ENCODE measurements at regions of chr10 and their contacts with region 1.

Region 1: DNA sequence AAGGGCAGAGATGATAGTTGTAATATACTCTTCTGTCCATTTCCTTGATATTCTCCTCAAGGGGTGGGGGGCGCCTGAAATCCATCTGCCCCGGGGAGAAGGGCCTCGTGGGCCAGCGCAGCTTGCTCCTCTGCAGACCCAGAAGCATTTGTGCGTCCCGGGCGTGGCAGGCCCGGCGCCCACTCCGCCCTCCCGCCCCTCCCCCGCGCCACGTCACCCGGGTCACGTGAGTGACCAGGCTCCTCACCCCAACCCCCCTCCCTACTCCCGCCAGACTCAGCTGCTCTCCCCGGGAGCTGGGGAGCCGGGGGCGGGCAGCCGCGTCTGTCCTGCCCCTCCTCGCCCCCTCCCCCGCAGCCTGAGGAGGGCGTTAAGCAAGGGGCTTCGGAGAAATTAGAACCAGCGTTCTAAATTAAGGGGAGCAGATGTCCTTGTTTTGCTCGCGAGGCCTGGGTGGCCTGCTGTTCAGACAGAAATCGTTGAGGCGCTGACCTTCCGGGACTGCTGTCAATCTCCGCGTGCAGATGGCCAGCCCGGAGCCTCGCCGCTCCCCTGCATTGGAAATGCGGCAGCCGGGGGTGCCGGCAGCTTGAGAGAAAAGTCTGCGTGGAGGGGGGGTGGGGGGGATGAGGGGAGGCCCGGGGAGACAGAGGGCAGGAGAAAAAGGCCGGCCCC is 102.1 kb upstream of the ZNF438 start:
- DNase-seq: peak; percentile 64 to 97 (median 78)

Region 2: DNA sequence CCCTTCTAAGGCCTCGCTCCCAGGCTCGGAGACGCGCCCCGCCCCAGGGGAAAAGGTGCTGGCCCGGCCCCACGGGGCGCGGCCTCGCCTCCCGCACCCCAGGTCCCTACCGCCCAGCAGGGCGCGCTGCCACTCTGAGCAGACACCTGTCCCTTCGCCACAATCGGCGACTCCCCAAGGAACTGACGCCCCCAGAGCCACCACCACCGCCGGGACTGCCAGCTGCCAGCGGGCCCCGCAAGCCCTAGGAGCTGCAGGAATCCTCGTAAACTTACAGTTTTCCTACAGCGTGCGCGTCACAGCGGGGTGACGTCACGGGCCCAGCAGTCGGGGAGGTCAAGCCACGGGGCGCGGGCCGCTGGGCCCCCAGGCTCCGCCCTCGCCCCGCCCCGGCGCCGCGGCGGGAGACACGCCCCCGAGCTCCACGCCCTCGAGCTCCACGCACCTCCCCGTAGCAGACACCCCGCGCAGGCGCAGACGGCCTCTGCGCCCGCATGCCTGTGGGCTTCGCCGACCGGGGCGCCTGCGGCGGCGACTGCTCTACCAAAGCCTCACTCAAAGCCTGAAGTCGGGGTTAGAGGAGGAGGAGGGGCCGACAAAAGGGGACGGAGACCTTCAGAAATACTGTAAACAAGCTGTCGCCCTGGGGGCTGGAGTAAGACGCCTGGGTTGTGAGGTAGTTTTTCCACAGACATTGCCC is 102.1 kb before region 1 on chr10 and contains the start of gene ZNF438:
- intact Hi-C with region 1: loop called (anchors 2 kb)
- DNase-seq: peak; percentile 86 to 99 (median 93)

Region 3: DNA sequence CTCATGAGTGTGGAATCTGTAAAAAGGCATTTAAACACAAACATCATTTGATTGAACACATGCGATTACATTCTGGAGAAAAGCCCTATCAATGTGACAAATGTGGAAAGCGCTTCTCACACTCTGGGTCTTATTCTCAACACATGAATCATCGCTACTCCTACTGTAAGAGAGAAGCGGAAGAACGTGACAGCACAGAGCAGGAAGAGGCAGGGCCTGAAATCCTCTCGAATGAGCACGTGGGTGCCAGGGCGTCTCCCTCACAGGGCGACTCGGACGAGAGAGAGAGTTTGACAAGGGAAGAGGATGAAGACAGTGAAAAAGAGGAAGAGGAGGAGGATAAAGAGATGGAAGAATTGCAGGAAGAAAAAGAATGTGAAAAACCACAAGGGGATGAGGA is 392.9 kb after region 1 on chr10:
- intact Hi-C with region 1: no loop called
- DNase-seq: peak in 1 of 10 donors; percentile 63

Measured in posterior cingulate gyrus (tissue), 11 donors.